ENCODE measurements at regions of chr20 and their contacts with region 1.

Region 1: DNA sequence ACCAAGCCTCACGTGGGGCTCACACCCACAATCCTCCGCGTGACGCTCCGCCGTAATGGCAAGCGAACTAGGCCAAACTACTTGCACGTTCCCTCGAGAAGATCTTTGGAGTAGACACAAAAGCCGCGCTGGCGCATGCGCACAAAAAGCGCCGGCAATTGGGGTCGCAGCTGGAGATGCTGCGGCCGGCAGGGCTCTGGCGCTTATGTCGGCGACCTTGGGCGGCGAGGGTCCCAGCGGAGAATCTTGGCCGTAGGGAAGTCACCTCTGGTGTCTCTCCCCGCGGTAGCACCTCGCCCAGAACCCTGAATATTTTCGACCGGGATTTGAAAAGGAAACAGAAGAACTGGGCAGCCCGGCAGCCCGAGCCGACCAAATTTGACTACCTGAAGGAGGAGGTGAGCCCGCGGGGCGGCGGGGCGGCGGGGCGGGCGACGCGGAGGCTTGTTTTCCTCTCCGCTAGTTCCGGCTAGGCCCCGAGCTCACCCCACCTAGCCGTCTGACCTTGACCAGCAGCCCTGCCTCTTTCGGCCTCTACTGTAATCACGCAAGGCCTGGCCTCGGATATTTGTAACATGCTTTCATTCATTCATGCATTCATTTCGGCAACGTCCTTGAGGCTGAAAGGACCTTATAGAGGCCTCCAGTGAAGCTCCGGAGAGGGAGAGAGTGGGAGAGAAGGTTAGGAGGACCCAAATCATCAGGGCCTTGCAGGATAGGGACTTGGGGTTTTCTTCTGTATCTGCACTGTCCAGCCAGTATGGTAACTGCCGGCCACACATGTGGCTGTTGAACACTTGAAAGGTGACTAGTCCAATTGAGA is at the starts of genes ESF1 and NDUFAF5:
- DNase-seq: peak; percentile 97
- H3K4me3 Mint-ChIP-seq: peak within 1 kb of the TSS; percentile 87
- H3K27ac Mint-ChIP-seq: peak within 1 kb of the TSS; percentile 99
- H3K4me1 Mint-ChIP-seq: peaks cover 41% of the 10 kb centered on the region
- H3K27me3 Mint-ChIP-seq: no peaks in the 10 kb centered on the region
- CTCF ChIP-seq: no peak
- total RNA-seq, gene ESF1: 17.4 and 21.2 TPM in 2 replicates
- total RNA-seq, gene NDUFAF5: 43.4 and 44.1 TPM in 2 replicates

Region 2: GRCh38 chr20:13755809-13756208 is 29.3 kb before region 1 on chr20:
- CTCF ChIA-PET with region 1: interaction called, 4 read pairs
- POLR2A ChIA-PET with region 1: interaction called, 12 read pairs
- intact Hi-C with region 1: no loop called
- DNase-seq: no peak
- H3K4me3 Mint-ChIP-seq: no peak overlapping the region
- H3K27ac Mint-ChIP-seq: no peak overlapping the region
- H3K4me1 Mint-ChIP-seq: no peaks in the 10 kb centered on the region
- H3K27me3 Mint-ChIP-seq: no peaks in the 10 kb centered on the region
- CTCF ChIP-seq: no peak

Region 3: DNA sequence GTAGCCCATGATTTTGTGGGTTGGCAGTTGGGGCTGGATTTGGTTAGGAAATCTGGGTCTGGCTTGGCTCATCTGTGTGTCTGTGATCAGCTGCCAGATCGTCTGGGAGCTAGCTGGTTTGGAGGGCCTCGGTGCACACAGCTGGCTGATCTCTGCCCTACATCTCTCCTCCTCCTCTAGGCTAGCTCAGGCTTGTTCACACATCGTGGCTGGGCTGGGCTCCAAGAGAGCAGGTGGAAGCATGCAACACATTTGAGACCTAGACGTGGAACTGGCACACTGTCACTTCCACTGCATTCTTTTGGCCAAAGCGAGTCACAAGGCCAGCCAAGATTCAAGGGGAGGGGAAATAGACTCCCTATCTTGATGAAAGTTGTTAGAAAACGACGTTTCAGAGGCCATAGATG is 15.6 kb after region 1 on chr20:
- CTCF ChIA-PET with region 1: interaction called, 48 read pairs
- POLR2A ChIA-PET with region 1: interaction called, 121 read pairs
- intact Hi-C with region 1: no loop called
- DNase-seq: peak; percentile 98
- H3K4me3 Mint-ChIP-seq: peak overlapping the region; percentile 39
- H3K27ac Mint-ChIP-seq: peak overlapping the region; percentile 7
- H3K4me1 Mint-ChIP-seq: peaks cover 21% of the 10 kb centered on the region
- H3K27me3 Mint-ChIP-seq: no peaks in the 10 kb centered on the region
- CTCF ChIP-seq: no peak

Region 4: DNA sequence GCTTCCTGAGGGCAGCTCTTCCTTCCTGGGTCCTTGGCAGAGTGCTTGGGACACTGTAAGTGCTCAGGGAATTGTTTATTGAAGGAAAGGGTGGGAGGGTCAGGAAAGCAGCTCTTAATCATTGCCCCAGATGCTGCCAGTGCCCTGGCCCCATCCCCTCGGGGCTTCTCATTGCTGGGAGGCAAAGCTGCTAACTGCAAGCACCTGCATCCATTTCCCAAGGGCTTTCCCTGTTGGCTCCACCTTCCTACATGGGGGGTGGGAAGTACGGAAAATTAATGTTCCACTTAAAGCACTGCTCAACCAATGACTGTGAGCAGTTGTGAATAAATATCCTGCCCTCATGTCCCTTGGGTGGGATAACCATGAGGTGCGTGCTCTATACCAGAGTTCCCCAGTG is 56.1 kb after region 1 on chr20:
- CTCF ChIA-PET with region 1: no interaction called
- POLR2A ChIA-PET with region 1: no interaction called
- intact Hi-C with region 1: no loop called
- DNase-seq: no peak
- H3K4me3 Mint-ChIP-seq: no peak overlapping the region
- H3K27ac Mint-ChIP-seq: no peak overlapping the region
- H3K4me1 Mint-ChIP-seq: peaks cover 13% of the 10 kb centered on the region
- H3K27me3 Mint-ChIP-seq: no peaks in the 10 kb centered on the region
- CTCF ChIP-seq: no peak

Region 5: DNA sequence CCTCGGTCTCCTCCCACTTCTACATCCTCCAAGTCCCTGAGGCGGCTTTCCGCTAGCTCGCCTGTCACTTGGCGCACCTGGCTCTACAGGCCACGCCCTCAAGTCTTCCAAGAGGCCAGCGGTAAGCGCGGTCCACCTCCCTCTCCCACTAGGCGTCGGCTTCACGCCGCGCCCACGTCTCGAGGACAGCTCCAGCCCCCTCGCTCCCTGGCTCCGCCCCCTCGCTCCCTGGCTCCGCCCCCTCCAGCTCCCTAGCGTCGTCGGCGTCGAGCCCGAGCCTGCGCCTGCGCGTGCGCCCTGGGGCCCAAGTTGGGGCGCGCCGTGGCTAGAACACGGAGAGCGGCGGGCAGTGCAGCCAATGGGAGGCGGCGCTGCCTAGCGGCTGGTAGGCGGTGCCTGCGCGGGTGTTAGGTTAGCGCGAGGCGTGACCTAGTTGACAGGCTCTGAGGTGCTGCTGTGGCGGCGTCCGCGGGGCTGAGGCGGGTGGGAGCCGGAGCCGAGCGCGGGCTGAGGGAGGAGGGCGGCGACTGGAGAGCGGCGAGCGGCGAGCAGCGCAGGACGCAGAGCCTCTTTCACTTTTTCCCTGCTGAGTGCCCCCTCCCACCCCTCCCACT is 210.1 kb after region 1 on chr20 and contains the start of gene MACROD2:
- CTCF ChIA-PET with region 1: no interaction called
- POLR2A ChIA-PET with region 1: interaction called, 15 read pairs
- intact Hi-C with region 1: no loop called
- DNase-seq: peak; percentile 97
- H3K4me3 Mint-ChIP-seq: peak within 1 kb of the TSS; percentile 95
- H3K27ac Mint-ChIP-seq: peak within 1 kb of the TSS; percentile 39
- H3K4me1 Mint-ChIP-seq: peaks cover 9% of the 10 kb centered on the region
- H3K27me3 Mint-ChIP-seq: no peaks in the 10 kb centered on the region
- CTCF ChIP-seq: no peak
- total RNA-seq, gene MACROD2: 2.3 and 3.1 TPM in 2 replicates